HEK293 (cell line): ENCODE measurements at regions of chr12 and their contacts with region 1.

Region 1: DNA sequence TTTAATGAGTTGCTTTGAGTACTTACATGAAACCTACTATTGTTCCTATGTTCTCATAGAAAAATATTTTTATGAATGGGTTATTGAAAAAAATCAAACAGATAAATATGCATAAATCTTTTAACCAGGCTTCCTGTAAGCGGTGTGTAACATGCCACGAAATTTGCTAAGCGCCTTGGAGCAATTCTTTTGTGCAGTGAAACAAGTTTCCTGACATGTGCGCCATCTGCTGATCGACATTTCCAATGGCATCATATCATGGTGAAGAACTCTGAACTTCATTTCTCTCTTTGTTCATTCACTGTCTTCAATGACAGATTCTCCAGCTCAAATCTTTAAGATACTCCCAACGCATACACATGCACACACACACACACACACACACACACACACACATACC is 145.6 kb upstream of the NAV3 start:
- H3K4me3 ChIP-seq: no peak overlapping the region
- H3K27ac ChIP-seq: no peak overlapping the region
- H3K4me1 ChIP-seq: 0 out of 2 replicates have a peak, but pooled peaks cover 2% of the 10 kb centered on the region
- CTCF ChIP-seq: no peak

Region 2: DNA sequence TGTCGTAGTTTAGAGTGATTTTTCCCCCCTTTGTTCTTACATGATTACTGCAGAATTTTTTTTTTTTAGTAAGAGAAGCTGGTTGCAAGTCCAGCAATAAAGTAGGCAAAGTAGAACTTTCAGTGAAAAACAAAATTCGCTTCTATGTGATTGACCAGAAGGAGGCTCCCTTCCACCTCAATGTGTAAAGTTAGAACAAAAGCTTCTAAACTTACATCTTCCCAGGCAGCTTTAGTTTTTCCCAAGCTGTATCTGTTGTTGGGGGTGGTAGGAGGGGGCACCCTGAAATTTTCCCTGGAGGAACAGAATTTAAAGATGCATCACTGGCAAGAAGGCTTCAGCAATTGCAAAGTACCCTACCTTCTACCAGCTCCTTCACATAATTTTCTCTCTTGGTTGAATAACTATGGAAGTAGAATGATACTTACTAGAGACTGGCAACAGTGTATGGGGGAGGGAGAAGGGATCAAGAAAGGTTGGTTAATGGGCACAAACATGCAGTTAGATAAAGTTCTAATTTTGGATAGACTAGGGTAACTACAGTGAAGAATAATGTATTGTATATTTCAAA is 532.4 kb before region 1 on chr12:
- CTCF ChIA-PET with region 1: interaction called, 26 read pairs
- POLR2A ChIA-PET with region 1: no interaction called
- H3K4me3 ChIP-seq: no peak overlapping the region
- H3K27ac ChIP-seq: no peak overlapping the region
- H3K4me1 ChIP-seq: no peaks in the 10 kb centered on the region
- CTCF ChIP-seq: no peak